GM12878 (cell line): ENCODE measurements at regions of chr6 and their contacts with region 1.

Region 1: DNA sequence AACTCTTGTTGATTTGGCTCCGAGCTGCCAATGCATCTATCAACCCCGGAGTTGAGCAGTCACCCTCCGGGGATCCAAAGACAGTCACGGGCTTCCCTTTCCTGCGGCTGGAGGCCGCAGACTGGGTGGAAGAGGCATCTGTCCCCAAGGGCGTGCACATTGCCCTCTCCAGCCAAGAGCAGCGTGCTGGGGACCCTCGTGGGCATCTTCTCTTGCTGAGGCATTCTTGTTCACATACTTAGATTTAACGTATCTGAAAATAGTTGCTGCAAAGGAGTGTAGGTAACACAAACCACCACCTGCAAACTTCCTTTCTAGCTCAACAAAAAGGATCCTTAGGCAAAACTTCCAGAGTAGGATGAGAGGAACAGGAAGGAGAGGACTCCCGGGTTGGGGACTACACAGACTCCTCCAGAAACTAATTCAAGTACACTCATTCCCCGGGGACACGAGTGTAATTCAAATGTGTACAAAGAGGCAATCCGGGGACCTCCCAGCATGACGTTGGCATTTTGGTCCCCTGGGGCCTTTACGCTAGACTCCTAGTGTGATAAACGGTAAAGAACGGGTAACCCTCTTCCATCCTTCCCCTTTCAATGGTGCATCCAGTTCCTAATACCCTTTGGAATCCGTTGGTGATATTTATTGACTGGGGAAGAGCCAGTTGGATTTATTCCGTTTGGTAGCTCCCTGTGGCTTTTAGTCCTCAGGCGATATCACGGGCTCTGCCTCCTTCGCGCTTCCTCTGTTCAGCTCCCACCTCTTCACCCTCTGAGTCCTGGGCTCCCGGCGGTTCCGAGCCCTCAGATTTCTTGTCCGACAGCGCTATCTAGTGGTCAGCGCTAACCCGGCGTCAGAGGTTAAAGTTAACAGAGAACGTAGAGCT is 2.7 kb upstream of the COL12A1 start:
- DNase-seq: peak; percentile 23
- ATAC-seq: peak; percentile 86
- H3K4me3 ChIP-seq: no peak overlapping the region
- H3K27ac ChIP-seq: no peak overlapping the region
- H3K4me1 ChIP-seq: no peaks in the 10 kb centered on the region
- H3K27me3 ChIP-seq: peaks cover 29% of the 10 kb centered on the region in 2 experiments
- CTCF ChIP-seq: peak; percentile 82 to 96 (median 92)
- EP300 ChIP-seq: no peak
- POLR2A ChIP-seq: no peak
- RAD21 ChIP-seq: peak; percentile 96

Region 2: DNA sequence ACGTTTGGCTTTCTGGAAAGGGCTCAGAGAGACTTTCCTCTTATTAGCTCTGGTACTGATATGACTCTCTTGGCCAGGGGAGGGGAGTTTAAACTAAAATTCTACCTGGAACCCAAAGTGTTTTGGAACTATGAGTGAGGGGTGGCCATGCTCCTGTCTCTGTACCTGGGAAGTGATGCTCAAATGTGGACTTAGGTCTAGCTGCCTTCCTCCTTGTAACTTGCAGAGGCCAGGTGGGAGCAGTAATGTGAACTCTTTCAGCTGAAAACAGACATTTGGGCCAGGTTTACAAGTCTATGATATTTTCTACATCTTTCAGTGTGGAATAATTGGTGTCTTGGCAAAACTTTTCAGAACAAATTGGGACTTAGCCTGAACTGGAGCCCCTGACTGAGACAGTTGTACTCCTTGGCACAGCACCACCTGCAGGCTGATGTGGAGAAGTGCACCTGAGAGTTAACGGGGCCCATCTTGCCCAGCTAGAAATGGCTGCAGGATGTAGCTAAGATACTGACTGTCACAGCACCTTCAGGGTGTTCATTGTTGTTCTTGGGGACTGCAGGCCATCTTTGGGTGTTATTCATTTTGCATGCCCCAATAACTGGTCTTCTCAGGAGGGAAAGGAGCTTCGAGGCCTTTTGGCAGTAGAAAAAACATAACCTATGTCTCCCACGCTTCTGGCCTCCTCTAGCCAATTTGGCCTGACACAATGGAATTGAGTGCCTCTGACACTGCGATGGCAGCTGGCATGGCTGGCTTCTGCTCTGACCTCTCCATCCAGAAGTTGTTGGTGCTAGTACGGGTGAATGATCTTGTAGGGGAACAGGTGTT is 1475.5 kb before region 1 on chr6:
- CTCF ChIA-PET with region 1: interaction called, 74 read pairs
- POLR2A ChIA-PET with region 1: no interaction called
- RAD21 ChIA-PET with region 1: interaction called, 46 read pairs
- SMC1A ChIA-PET with region 1: interaction called, 50 read pairs
- in situ Hi-C with region 1: no loop called
- intact Hi-C with region 1: loop called (anchors 2 kb)
- DNase-seq: peak; percentile 31
- ATAC-seq: peak; percentile 90
- H3K4me3 ChIP-seq: no peak overlapping the region
- H3K27ac ChIP-seq: no peak overlapping the region
- H3K4me1 ChIP-seq: peaks cover 4% of the 10 kb centered on the region
- H3K27me3 ChIP-seq: no peaks in the 10 kb centered on the region
- CTCF ChIP-seq: peak; percentile 86 to 95 (median 92)
- EP300 ChIP-seq: no peak
- POLR2A ChIP-seq: no peak
- RAD21 ChIP-seq: peak; percentile 85

Region 3: DNA sequence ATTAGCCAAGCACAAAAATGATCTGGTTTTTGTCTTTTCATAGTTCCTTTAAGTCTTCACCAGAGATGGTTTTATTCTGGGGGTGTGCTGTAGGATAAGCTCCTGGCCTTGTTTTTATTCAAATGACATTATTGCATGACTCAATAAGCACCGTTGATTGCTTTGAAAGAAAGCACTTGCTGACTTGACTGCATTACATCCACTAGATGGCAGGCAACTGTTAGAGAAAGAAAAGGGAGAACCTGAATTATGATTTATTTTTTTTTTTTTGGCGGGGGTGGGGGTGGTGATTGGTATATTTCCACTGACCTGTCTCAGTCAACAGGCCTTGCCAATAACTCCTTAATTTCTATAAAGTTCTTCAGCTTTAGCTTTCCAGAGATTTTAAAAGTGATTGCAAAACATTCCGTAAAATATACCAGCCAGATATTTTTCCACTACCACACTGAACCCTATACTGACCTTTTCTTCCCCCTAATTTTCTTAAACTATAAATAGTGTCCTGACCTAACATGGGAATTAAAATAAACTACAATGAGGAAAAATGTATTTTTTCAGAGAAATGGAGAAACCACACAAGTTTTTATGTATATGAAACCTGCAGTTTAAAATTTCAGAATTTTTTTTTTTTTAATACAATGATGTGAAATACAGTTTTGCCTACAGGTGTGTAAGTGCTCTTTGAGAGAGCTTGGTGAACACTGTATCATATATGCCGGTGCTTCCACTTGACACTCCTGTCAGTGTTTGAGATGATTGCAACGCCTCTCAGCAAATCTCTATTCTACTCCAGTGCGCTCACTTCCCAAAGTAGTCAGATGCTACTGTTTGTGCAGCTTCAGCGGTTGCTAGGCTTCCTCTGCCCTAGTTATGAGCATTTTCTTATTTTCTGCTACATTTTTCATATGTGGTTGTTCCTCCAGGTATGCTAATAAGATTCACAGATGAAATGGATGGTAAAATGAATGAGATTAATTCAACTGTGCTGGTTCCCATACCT is 1238.3 kb before region 1 on chr6:
- CTCF ChIA-PET with region 1: interaction called, 19 read pairs
- POLR2A ChIA-PET with region 1: no interaction called
- RAD21 ChIA-PET with region 1: interaction called, 10 read pairs
- SMC1A ChIA-PET with region 1: interaction called, 13 read pairs
- in situ Hi-C with region 1: no loop called
- intact Hi-C with region 1: loop called (anchors 1 kb)
- DNase-seq: no peak
- ATAC-seq: peak; percentile 72
- H3K4me3 ChIP-seq: no peak overlapping the region
- H3K27ac ChIP-seq: no peak overlapping the region
- H3K4me1 ChIP-seq: no peaks in the 10 kb centered on the region
- H3K27me3 ChIP-seq: no peaks in the 10 kb centered on the region; a peak in 1 of 4 replicates
- CTCF ChIP-seq: peak; percentile 30 to 52 (median 46); a peak in 5 of 6 replicates
- EP300 ChIP-seq: no peak
- POLR2A ChIP-seq: no peak
- RAD21 ChIP-seq: peak; percentile 61

Region 4: GRCh38 chr6:74409447-74409846 is 799.1 kb before region 1 on chr6:
- CTCF ChIA-PET with region 1: interaction called, 71 read pairs
- POLR2A ChIA-PET with region 1: interaction called, 3 read pairs
- RAD21 ChIA-PET with region 1: interaction called, 64 read pairs
- SMC1A ChIA-PET with region 1: interaction called, 64 read pairs
- in situ Hi-C with region 1: loop called (anchors 10 kb)
- intact Hi-C with region 1: loop called (anchors 1 kb)
- DNase-seq: no peak
- ATAC-seq: peak; percentile 92
- H3K4me3 ChIP-seq: no peak overlapping the region
- H3K27ac ChIP-seq: no peak overlapping the region
- H3K4me1 ChIP-seq: no peaks in the 10 kb centered on the region
- H3K27me3 ChIP-seq: no peaks in the 10 kb centered on the region
- CTCF ChIP-seq: peak; percentile 18 to 65 (median 24); a peak in 4 of 6 replicates
- EP300 ChIP-seq: no peak
- POLR2A ChIP-seq: no peak
- RAD21 ChIP-seq: peak; percentile 90

Region 5: GRCh38 chr6:74899416-74899815 is 309.1 kb before region 1 on chr6:
- CTCF ChIA-PET with region 1: interaction called, 6 read pairs
- POLR2A ChIA-PET with region 1: no interaction called
- RAD21 ChIA-PET with region 1: interaction called, 3 read pairs
- SMC1A ChIA-PET with region 1: no interaction called
- in situ Hi-C with region 1: no loop called
- intact Hi-C with region 1: loop called (anchors 10 kb)
- DNase-seq: no peak
- ATAC-seq: no peak
- H3K4me3 ChIP-seq: no peak overlapping the region
- H3K27ac ChIP-seq: no peak overlapping the region
- H3K4me1 ChIP-seq: no peaks in the 10 kb centered on the region
- H3K27me3 ChIP-seq: no peaks in the 10 kb centered on the region
- CTCF ChIP-seq: no peak
- EP300 ChIP-seq: no peak
- POLR2A ChIP-seq: no peak
- RAD21 ChIP-seq: no peak

Region 6: GRCh38 chr6:75526502-75527127 is 318.1 kb after region 1 on chr6:
- CTCF ChIA-PET with region 1: interaction called, 11 read pairs
- POLR2A ChIA-PET with region 1: no interaction called
- RAD21 ChIA-PET with region 1: interaction called, 9 read pairs
- SMC1A ChIA-PET with region 1: interaction called, 4 read pairs
- in situ Hi-C with region 1: no loop called
- intact Hi-C with region 1: loop called (anchors 5 kb)
- DNase-seq: peak; percentile 40
- ATAC-seq: peak; percentile 97
- H3K4me3 ChIP-seq: no peak overlapping the region
- H3K27ac ChIP-seq: no peak overlapping the region
- H3K4me1 ChIP-seq: no peaks in the 10 kb centered on the region
- H3K27me3 ChIP-seq: no peaks in the 10 kb centered on the region
- CTCF ChIP-seq: peak; percentile 61 to 78 (median 65)
- EP300 ChIP-seq: no peak
- POLR2A ChIP-seq: no peak
- RAD21 ChIP-seq: peak; percentile 95